H1 (cell line): ENCODE measurements at regions of chr13 and their contacts with region 1.

Region 1: DNA sequence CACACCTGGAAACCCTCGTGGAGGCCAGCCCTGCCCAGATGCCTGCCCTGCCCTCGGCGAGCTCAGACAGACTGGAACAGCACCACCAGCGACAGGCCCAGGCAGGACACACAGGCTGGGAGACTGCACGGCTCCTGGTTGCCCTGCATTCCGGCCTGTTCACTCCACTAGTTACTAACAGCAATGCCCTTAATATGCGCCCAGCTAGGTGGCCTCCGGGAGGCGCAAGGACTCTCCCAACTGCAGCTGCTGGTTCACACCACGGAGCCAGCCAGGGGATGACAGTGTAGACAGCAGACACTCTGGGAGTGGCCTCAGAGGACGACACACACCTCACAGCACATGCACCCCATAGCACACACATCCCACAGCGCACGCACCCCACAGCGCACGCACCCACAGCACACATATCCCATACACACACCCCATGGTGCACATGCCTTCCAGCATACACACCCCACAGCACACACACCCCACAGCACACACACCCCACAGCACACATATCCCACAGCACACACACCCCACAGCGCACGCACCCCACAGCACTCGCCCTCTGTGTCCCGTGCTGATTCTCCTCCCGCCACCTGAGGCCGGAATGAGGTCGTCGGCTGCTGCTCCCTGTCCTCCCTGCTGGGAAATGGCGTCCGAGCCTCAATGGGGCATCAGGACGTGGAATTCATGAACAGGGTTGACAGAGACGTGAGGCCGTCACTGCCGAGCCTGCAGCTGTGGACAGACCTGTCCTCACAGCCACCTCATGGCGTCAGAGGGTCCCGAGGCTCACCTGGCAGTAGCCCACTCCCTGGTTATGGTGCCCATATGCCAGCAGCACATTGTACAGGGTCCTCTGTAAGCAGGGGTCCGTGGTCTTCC is 13.6 kb downstream of the GRTP1 start:
- DNase-seq: no peak
- H3K4me3 ChIP-seq: no peak overlapping the region
- H3K27ac ChIP-seq: no peak overlapping the region
- H3K4me1 ChIP-seq: no peaks in the 10 kb centered on the region
- H3K27me3 ChIP-seq: no peaks in the 10 kb centered on the region
- CTCF ChIP-seq: peak in 2 of 3 experiments; percentile 24 to 43; a peak in 2 of 4 replicates
- EP300 ChIP-seq: no peak
- POLR2A ChIP-seq: no peak
- RAD21 ChIP-seq: peak; percentile 48 to 63; a peak in 3 of 4 replicates

Region 2: GRCh38 chr13:113364311-113364889 is 14.1 kb after region 1 on chr13:
- CTCF ChIA-PET with region 1: interaction called, 8 read pairs
- POLR2A ChIA-PET with region 1: interaction called, 78 read pairs
- DNase-seq: no peak
- H3K4me3 ChIP-seq: peak overlapping the region in 3 of 4 experiments; percentile 6 to 52 (median 10); a peak in 4 of 8 replicates
- H3K27ac ChIP-seq: no peak overlapping the region; the same call in 1 of the 2 replicates
- H3K4me1 ChIP-seq: peaks cover 2 to 25% (median 7%) of the 10 kb centered on the region in 4 experiments
- H3K27me3 ChIP-seq: 0 out of 7 replicates have a peak, but pooled peaks cover 0 to 4% (median 0%) of the 10 kb centered on the region in 4 experiments
- CTCF ChIP-seq: no peak
- EP300 ChIP-seq: no peak
- POLR2A ChIP-seq: no peak; a peak in 1 of 3 replicates
- RAD21 ChIP-seq: no peak